ENCODE measurements at regions of chr1 and their contacts with region 1.

Region 1: GRCh38 chr1:223001653-223002634 is 141.1 kb downstream of the TLR5 start:
- DNase-seq: peak; percentile 64
- ATAC-seq: peak; percentile 83
- H3K4me3 ChIP-seq: no peak overlapping the region
- H3K27ac ChIP-seq: no peak overlapping the region
- H3K4me1 ChIP-seq: peaks cover 18% of the 10 kb centered on the region
- H3K27me3 ChIP-seq: no peaks in the 10 kb centered on the region
- CTCF ChIP-seq: peak; percentile 70

Region 2: GRCh38 chr1:222792744-222793143 is 209.2 kb before region 1 on chr1:
- CTCF ChIA-PET with region 1: no interaction called
- POLR2A ChIA-PET with region 1: no interaction called
- intact Hi-C with region 1: loop called (anchors 1 kb)
- DNase-seq: peak; percentile 74
- ATAC-seq: peak; percentile 38; the same call in 1 of the 2 replicates
- H3K4me3 ChIP-seq: no peak overlapping the region
- H3K27ac ChIP-seq: no peak overlapping the region
- H3K4me1 ChIP-seq: no peaks in the 10 kb centered on the region
- H3K27me3 ChIP-seq: no peaks in the 10 kb centered on the region
- CTCF ChIP-seq: peak; percentile 95

Region 3: DNA sequence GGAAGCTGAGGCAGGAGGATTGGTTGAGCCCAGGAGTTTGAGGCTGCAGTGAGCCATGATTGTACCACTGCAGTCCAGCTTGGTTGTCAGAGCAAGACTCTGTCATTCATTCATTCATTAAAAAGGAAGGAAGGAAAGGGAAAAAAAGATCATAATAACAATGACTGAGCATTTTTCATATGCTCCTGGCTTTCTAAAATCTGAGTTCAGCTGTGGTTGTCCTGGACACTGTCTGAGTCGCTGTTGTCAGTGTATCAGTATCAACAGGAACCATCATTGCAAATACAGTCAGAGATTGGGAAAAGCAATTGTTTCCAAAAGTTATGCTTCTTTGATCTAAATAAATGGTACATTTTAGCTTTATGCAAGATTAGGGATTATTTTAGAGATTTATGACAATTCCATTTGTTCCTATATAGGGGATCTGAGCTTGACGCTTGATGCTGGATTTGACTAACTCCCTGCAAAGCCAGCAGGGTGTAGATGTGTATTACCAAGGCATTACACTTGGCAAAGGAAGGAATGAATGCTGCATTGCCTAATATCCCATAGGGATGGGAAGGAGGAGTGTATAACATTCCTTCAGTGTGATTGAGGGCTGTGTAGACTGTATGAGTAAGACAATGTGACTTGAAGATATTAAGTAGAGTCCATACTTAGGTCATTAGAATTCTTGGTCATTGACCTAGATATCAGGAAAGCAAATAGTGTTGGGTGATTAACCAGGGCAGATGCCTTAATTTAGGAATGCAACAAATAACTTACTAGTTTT is 86.9 kb before region 1 on chr1:
- CTCF ChIA-PET with region 1: no interaction called
- POLR2A ChIA-PET with region 1: no interaction called
- intact Hi-C with region 1: no loop called
- DNase-seq: peak; percentile 92
- ATAC-seq: peak; percentile 81
- H3K4me3 ChIP-seq: no peak overlapping the region
- H3K27ac ChIP-seq: peak overlapping the region; percentile 65
- H3K4me1 ChIP-seq: peaks cover 48% of the 10 kb centered on the region
- H3K27me3 ChIP-seq: no peaks in the 10 kb centered on the region
- CTCF ChIP-seq: peak; percentile 41; the same call in 1 of the 2 replicates

Region 4: DNA sequence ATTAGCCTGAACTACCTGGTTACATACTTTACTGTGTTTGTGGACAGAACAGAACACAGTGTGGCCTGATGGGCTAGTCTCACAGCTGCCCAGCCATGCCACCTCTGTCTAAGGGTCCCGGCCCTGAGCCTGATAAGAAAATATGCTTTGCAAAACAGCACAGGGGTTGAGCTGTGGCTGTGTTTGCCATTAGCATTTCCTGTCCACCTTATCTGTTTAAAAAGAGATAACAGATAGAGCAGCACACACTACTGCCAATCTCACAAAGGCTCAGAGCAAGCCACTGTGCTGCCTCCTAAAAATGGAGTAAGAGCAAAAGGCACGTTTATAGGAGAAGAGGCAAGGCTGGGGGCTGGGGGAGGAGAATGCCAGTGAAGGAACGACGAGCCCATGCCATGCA is 267.1 kb after region 1 on chr1:
- CTCF ChIA-PET with region 1: no interaction called
- POLR2A ChIA-PET with region 1: no interaction called
- intact Hi-C with region 1: no loop called
- DNase-seq: no peak
- ATAC-seq: no peak
- H3K4me3 ChIP-seq: no peak overlapping the region
- H3K27ac ChIP-seq: no peak overlapping the region
- H3K4me1 ChIP-seq: no peaks in the 10 kb centered on the region
- H3K27me3 ChIP-seq: peaks cover 72% of the 10 kb centered on the region
- CTCF ChIP-seq: no peak

Measured in PC-3 (cell line).